Posterior vena cava (tissue), 2 donors: ENCODE measurements at regions of chr2 and their contacts with region 1.

Region 1: GRCh38 chr2:234269769-234270204 is 219.3 kb downstream of the SPP2 start:
- DNase-seq: no peak

Region 2: DNA sequence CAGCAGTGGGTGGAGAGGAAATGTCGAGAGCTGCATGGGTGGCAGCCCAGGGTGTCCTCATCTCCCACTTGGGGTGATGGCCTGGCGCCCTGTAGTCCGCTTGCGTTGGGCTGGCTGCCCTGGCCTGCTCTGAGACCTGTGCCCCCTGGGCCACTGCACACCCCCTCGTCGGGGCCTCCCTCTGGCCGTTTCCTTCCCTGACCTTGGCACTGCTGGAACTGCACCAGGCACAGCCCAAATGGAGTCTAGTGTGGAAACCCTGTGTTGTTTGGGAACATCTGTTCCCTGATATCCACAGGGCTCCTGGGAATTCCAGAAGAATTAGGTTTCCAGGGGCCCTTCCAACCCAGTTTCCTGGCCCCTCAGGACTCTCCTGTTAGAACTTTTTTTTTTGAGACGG is 1622.5 kb before region 1 on chr2:
- intact Hi-C with region 1: loop called in 1 of 2 experiments (anchors 5 kb)
- DNase-seq: no peak